Adrenal gland (tissue), 19 donors: ENCODE measurements at regions of chr14 and their contacts with region 1.

Region 1: GRCh38 chr14:88792572-88793258 is at the start of gene EML5:
- DNase-seq: peak; percentile 88 to 93 (median 89)
- H3K4me3 ChIP-seq: peak within 1 kb of the TSS; percentile 36 to 93 (median 50)
- H3K27ac ChIP-seq: peak within 1 kb of the TSS; percentile 41 to 90 (median 63)
- H3K4me1 ChIP-seq: no peaks in the 10 kb centered on the region
- H3K27me3 ChIP-seq: no peaks in the 10 kb centered on the region
- CTCF ChIP-seq: peak; percentile 17 to 72 (median 50)
- POLR2A ChIP-seq: peak; percentile 37 to 78
- total RNA-seq, gene EML5: 2.0 to 17.3 (median 8.3) TPM

Region 2: GRCh38 chr14:88667555-88668273 is 125.0 kb before region 1 on chr14:
- intact Hi-C with region 1: loop called in 1 of 2 experiments (anchors 5 kb)
- DNase-seq: peak; percentile 60 to 80 (median 68)
- H3K4me3 ChIP-seq: no peak overlapping the region
- H3K27ac ChIP-seq: no peak overlapping the region
- H3K4me1 ChIP-seq: peaks cover 5 to 7% of the 10 kb centered on the region in 2 donors
- H3K27me3 ChIP-seq: no peaks in the 10 kb centered on the region
- CTCF ChIP-seq: peak; percentile 67 to 88 (median 79)
- POLR2A ChIP-seq: no peak

Region 3: GRCh38 chr14:88841741-88842140 is 49.0 kb after region 1 on chr14:
- intact Hi-C with region 1: loop called in 1 of 2 experiments (anchors 10 kb)
- DNase-seq: no peak
- H3K4me3 ChIP-seq: no peak overlapping the region
- H3K27ac ChIP-seq: peak overlapping the region in 2 of 5 donors; percentile 0 to 40
- H3K4me1 ChIP-seq: peaks cover 0 to 21% of the 10 kb centered on the region in 2 donors
- H3K27me3 ChIP-seq: no peaks in the 10 kb centered on the region
- CTCF ChIP-seq: no peak
- POLR2A ChIP-seq: no peak